Right ventricle myocardium inferior (tissue), 1 donor: ENCODE measurements at regions of chr13 and their contacts with region 1.

Region 1: DNA sequence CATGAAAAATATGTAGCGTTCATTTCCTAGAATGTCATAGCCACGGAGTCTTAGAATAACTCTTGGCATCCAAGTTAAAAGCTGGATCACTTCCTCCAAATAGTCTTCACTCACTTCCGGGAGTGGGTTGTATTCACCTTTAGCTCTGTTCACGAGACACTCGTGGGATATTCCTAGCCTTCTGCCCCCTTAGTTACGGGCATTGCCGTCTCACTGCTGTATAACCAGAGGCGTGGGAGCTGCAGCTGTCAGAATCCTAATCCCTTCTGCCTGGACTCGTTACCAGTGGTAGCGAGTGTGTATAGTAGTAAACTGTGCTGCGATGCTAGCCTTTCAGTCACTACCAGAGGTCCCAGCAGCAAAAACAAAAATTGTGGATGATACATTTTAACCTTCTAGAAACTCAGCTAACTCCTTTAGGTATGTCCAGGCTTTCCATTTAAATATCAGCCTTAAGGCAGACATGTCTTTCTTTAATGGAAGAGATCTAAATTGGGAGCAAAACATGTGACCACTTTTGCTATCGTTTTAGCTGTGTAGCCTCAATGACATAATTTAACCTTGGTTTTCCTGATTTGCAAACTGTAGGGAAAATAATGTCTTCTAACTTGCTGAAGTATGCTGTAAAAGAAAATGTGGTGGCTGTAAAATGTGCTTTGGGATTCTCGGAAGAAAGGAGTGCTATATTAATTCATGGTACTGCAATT is 34.1 kb downstream of the ERCC5 start:
- DNase-seq: no peak
- ATAC-seq: peak; percentile 80

Region 2: GRCh38 chr13:102897371-102898138 is 17.6 kb after region 1 on chr13:
- intact Hi-C with region 1: loop called (anchors 1 kb)
- DNase-seq: peak; percentile 77
- ATAC-seq: peak; percentile 95